ENCODE measurements at regions of chr13 and their contacts with region 1.

Region 1: GRCh38 chr13:54185785-54186184 is 1157.2 kb downstream of the OLFM4 start:
- DNase-seq: no peak
- ATAC-seq: no peak

Region 2: GRCh38 chr13:54198911-54199310 is 13.1 kb after region 1 on chr13:
- intact Hi-C with region 1: loop called (anchors 2 kb)
- DNase-seq: no peak
- ATAC-seq: no peak

Region 3: GRCh38 chr13:54261856-54262255 is 76.1 kb after region 1 on chr13:
- intact Hi-C with region 1: no loop called
- DNase-seq: no peak
- ATAC-seq: no peak

Measured in Right ventricle myocardium superior (tissue), 1 donor.